Dorsolateral prefrontal cortex (tissue), 120 donors: ENCODE measurements at regions of chr3 and their contacts with region 1.

Region 1: DNA sequence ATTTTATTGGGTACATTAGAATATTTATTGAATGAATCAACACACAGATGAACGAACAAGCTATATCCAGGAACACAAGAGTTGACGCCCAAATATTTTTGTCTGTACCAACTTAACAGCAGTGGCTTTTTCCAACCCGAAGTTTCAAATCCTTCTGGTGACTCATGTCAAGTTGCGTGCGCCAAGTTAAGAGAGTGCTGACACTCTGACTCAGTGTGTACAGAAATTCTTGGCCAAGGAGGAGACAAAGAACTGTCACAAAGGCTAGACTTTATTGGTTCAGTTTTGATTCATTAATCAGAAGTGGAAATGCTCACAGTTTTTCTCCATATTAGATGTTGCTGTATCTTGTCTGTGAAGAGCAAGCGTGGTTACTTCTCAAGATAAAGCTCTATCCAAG is 59.6 kb upstream of the TSC22D2 start:
- DNase-seq: no peak
- H3K4me3 ChIP-seq: no peak overlapping the region
- H3K27ac ChIP-seq: peak overlapping the region in 2 of 59 donors; percentile 1 to 32
- H3K27me3 ChIP-seq: no peaks in the 10 kb centered on the region
- CTCF ChIP-seq: no peak

Region 2: GRCh38 chr3:149936812-149937233 is 411.7 kb before region 1 on chr3:
- intact Hi-C with region 1: no loop called
- DNase-seq: peak in 3 of 10 donors; percentile 15 to 32 (median 26)
- H3K4me3 ChIP-seq: peak overlapping the region in 10 of 59 donors; percentile 4 to 37 (median 20)
- H3K27ac ChIP-seq: peak overlapping the region in 1 of 59 donors; percentile 7
- H3K27me3 ChIP-seq: no peaks in the 10 kb centered on the region
- CTCF ChIP-seq: peak in 55 of 56 donors; percentile 22 to 77 (median 57)

Region 3: GRCh38 chr3:150220799-150221198 is 127.7 kb before region 1 on chr3:
- intact Hi-C with region 1: loop called in 1 of 2 experiments (anchors 5 kb)
- DNase-seq: no peak
- H3K4me3 ChIP-seq: peak overlapping the region in 58 of 59 donors; percentile 5 to 63 (median 43)
- H3K27ac ChIP-seq: peak overlapping the region in 1 of 59 donors; percentile 1
- H3K27me3 ChIP-seq: no peaks in the 10 kb centered on the region
- CTCF ChIP-seq: no peak

Region 4: DNA sequence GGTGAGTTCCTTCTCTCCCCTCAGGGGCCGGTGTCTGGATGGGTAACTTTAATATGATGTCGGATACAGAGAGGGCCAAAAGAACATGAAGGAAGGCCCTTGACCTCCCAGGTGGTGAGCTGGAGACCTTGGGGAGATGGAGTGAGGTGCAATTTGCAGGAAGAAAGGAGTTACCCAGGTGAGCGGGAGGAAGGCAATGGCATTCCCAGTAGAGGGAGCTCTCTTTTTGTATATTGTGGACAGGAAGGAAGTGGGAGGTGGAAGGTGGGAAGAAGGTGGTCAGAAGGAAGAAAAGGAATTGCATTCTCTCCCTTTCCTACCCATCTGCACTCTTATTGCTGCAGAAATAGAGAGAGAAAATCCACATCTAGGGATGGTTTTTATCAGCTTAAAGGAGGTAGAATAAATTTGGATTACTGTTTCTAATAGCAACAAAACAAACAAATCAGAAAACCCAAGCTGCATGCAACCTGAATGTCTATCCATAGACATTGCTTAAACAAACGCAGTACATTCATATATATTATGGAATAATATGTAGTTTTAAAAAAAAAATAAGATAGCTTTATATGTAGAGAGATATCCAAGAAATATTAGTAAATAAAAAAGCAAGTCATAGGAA is 109.4 kb before region 1 on chr3:
- intact Hi-C with region 1: loop called in 1 of 2 experiments (anchors 5 kb)
- DNase-seq: no peak
- H3K4me3 ChIP-seq: no peak overlapping the region
- H3K27ac ChIP-seq: no peak overlapping the region
- H3K27me3 ChIP-seq: no peaks in the 10 kb centered on the region
- CTCF ChIP-seq: peak in 31 of 56 donors; percentile 10 to 52 (median 22)